ENCODE measurements at regions of chr4 and their contacts with region 1.

Region 1: GRCh38 chr4:123564758-123565346 is 168.3 kb downstream of the SPRY1 start:
- DNase-seq: peak in 8 of 9 donors; percentile 1 to 55 (median 26)
- ATAC-seq: peak; percentile 98
- H3K4me3 ChIP-seq: no peak overlapping the region
- H3K4me3 Mint-ChIP-seq: no peak overlapping the region
- H3K27ac ChIP-seq: no peak overlapping the region
- H3K27ac Mint-ChIP-seq: no peak overlapping the region
- H3K4me1 ChIP-seq: no peaks in the 10 kb centered on the region
- H3K4me1 Mint-ChIP-seq: peaks cover 0 to 6% (median 0%) of the 10 kb centered on the region in 7 donors
- H3K27me3 ChIP-seq: no peaks in the 10 kb centered on the region
- H3K27me3 Mint-ChIP-seq: peaks cover 8 to 25% (median 16%) of the 10 kb centered on the region in 5 donors

Region 2: DNA sequence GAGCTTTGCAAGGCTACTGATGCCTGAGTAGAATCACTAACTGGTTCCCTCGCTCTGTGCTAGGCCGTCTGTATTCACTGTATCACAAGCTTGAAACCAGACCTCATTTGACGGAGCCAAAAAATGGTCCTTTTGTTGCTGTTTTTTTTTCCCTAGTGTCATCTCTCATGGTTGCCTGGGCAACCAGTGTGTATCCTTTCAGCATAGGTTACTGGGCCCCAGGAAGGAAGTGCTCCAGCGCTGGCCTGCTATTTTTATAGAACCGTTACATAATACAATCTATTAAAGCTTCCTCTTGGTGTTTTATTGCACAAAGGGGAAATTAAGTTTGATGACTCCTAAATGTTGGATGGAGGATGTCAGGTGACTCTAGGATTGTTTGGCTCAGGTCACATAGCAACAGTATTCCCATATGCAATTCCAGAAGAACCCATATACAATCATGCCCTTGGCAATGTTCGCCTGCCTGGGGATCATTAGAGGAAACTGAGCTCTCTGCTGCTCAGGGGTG is 52.2 kb after region 1 on chr4:
- CTCF ChIA-PET with region 1: interaction called, 3 read pairs
- POLR2A ChIA-PET with region 1: no interaction called
- intact Hi-C with region 1: loop called in 1 of 2 experiments (anchors 5 kb)
- DNase-seq: peak in 7 of 9 donors; percentile 34 to 75 (median 62)
- ATAC-seq: peak; percentile 94
- H3K4me3 ChIP-seq: no peak overlapping the region
- H3K4me3 Mint-ChIP-seq: peak overlapping the region in 7 of 10 donors; percentile 16 to 64 (median 41)
- H3K27ac ChIP-seq: peak overlapping the region; percentile 8
- H3K27ac Mint-ChIP-seq: peak overlapping the region; percentile 37 to 92 (median 73)
- H3K4me1 ChIP-seq: peaks cover 12% of the 10 kb centered on the region in 2 donors
- H3K4me1 Mint-ChIP-seq: peaks cover 5 to 21% (median 17%) of the 10 kb centered on the region in 7 donors
- H3K27me3 ChIP-seq: no peaks in the 10 kb centered on the region
- H3K27me3 Mint-ChIP-seq: peaks cover 0 to 16% (median 0%) of the 10 kb centered on the region in 5 donors

Region 3: DNA sequence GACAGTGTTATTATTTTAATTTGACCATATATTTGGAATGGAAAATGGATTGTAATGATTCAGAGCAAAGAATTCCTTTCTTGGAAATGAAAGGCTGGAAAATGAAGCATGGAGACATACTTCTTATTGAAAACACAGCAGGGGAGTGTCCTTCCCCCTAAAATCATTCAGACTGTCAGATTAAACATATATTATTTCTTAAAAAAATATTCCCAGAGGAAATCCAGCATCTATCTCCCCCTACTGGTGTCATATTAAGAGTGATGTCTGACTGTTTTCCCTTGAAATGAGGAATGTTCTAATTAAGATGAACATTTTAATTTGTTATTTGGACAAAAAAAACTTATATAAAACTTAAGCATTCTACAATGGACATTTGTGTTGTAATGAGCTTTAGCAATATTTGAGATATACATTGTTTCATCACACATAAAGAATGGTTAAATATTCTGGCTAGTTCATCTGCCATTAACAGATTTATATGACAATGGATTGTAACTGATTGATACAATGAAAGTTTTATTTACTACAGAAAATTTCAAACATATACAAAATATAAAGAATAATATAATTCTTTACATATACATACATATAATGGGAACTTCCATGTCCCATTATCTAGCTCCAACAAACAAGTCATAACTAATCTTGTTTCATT is 96.4 kb after region 1 on chr4:
- CTCF ChIA-PET with region 1: interaction called, 7 read pairs
- POLR2A ChIA-PET with region 1: no interaction called
- intact Hi-C with region 1: loop called (anchors 2 kb)
- DNase-seq: peak in 3 of 9 donors; percentile 3 to 6 (median 4)
- ATAC-seq: no peak
- H3K4me3 ChIP-seq: no peak overlapping the region
- H3K4me3 Mint-ChIP-seq: no peak overlapping the region
- H3K27ac ChIP-seq: no peak overlapping the region
- H3K27ac Mint-ChIP-seq: no peak overlapping the region
- H3K4me1 ChIP-seq: no peaks in the 10 kb centered on the region
- H3K4me1 Mint-ChIP-seq: peaks cover 0 to 7% (median 0%) of the 10 kb centered on the region in 7 donors
- H3K27me3 ChIP-seq: no peaks in the 10 kb centered on the region
- H3K27me3 Mint-ChIP-seq: peaks cover 3 to 31% (median 5%) of the 10 kb centered on the region in 5 donors

Measured in naive thymus-derived CD4-positive, alpha-beta T cell (primary cell).